ENCODE measurements at regions of chr9 and their contacts with region 1.

Region 1: DNA sequence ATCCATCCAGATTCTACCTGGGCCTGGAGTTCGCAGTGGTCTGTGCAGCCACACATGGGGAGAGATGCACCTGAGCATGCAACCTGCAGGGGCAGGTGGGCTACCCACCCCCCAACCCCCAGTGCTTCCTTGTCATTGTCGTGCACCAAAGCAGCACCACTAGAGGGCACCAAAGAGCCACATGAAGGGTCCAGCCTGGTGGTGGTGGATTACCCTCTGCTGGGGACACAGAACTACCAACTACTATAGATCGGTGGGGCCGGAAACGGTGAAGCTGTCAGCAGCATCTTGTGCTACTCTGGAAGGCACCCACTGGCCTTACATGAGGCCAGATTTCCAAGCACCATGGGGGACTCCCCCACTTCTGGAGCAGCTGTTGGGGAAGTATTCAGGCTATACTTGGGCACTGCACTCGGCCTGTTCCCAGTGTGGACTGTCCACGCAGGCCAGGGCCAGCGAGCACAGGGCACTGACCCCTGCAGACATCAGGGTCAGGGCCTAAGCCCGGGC is 60.2 kb upstream of the TBC1D2 start:
- DNase-seq: peak; percentile 77 to 87
- ATAC-seq: peak; percentile 84
- H3K4me3 ChIP-seq: no peak overlapping the region
- H3K27ac ChIP-seq: no peak overlapping the region
- H3K4me1 ChIP-seq: no peaks in the 10 kb centered on the region
- H3K27me3 ChIP-seq: no peaks in the 10 kb centered on the region

Region 2: GRCh38 chr9:98056269-98057137 is 259.1 kb before region 1 on chr9 and contains the start of gene NANS:
- intact Hi-C with region 1: no loop called
- DNase-seq: peak; percentile 96 to 98
- ATAC-seq: peak; percentile 98
- H3K4me3 ChIP-seq: peak within 1 kb of the TSS; percentile 56 to 71
- H3K27ac ChIP-seq: peak within 1 kb of the TSS; percentile 89 to 94
- H3K4me1 ChIP-seq: no peaks in the 10 kb centered on the region
- H3K27me3 ChIP-seq: no peaks in the 10 kb centered on the region
- total RNA-seq, gene NANS: 40.8 to 47.3 TPM

Region 3: GRCh38 chr9:98775831-98776441 is 460.3 kb after region 1 on chr9:
- intact Hi-C with region 1: loop called (anchors 2 to 5 kb)
- DNase-seq: no peak
- ATAC-seq: no peak
- H3K4me3 ChIP-seq: no peak overlapping the region
- H3K27ac ChIP-seq: no peak overlapping the region
- H3K4me1 ChIP-seq: no peaks in the 10 kb centered on the region
- H3K27me3 ChIP-seq: no peaks in the 10 kb centered on the region

Measured in aorta (tissue), 5 donors.